ENCODE measurements at regions of chr7 and their contacts with region 1.

Region 1: DNA sequence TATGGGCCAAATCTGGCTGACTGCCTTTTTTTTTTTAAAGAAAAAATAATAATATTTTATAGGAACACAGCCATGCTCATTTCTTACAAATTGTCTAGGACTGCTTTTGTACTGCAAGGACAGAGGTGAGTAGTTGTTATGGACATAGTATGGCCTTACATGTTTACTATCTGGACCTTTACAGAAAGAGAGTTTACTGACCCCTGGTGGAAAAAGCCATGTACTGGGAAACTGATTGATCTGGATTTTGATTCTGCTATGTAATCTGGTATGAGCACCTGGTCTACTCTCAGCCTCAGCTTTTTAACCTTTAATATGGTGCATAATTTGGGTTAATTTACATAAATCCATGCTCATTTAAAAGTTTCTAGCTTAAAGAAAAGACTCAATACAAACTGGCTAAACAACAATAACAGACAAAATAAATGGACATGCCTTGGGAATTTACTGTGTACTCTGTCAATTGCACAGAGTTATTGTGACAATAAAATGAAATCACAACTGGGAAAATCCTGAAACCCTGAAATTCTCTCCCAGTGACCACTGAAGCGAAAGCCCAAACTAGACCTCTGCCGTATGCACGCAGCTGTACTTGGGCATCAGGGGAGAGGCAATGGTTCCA is 260.7 kb downstream of the BMPER start:
- DNase-seq: no peak
- H3K4me3 ChIP-seq: no peak overlapping the region
- H3K27ac ChIP-seq: no peak overlapping the region
- H3K4me1 ChIP-seq: no peaks in the 10 kb centered on the region
- H3K27me3 ChIP-seq: no peaks in the 10 kb centered on the region
- CTCF ChIP-seq: peak; percentile 11 to 39 (median 22)

Region 2: DNA sequence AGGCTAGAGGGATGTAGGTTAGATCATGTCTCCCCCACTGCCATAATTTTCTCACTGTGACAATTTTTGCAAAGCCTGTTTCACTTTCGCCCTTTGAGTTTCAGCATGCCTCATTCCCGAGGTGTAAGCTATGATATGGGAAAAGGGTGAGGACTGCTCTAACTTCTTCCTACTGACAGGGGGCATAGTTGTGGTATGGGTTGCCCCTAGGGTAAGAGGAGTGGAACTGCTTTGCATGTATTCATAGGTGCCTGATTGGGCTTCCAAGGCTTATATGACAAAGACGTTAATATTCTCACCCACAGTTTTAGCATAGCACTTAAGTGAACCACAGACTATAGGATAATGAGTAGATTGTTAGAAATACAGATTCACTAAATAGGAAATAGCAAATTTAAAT is 887.9 kb before region 1 on chr7:
- intact Hi-C with region 1: no loop called
- DNase-seq: no peak
- H3K4me3 ChIP-seq: no peak overlapping the region
- H3K27ac ChIP-seq: no peak overlapping the region
- H3K4me1 ChIP-seq: no peaks in the 10 kb centered on the region
- H3K27me3 ChIP-seq: no peaks in the 10 kb centered on the region
- CTCF ChIP-seq: no peak

Region 3: DNA sequence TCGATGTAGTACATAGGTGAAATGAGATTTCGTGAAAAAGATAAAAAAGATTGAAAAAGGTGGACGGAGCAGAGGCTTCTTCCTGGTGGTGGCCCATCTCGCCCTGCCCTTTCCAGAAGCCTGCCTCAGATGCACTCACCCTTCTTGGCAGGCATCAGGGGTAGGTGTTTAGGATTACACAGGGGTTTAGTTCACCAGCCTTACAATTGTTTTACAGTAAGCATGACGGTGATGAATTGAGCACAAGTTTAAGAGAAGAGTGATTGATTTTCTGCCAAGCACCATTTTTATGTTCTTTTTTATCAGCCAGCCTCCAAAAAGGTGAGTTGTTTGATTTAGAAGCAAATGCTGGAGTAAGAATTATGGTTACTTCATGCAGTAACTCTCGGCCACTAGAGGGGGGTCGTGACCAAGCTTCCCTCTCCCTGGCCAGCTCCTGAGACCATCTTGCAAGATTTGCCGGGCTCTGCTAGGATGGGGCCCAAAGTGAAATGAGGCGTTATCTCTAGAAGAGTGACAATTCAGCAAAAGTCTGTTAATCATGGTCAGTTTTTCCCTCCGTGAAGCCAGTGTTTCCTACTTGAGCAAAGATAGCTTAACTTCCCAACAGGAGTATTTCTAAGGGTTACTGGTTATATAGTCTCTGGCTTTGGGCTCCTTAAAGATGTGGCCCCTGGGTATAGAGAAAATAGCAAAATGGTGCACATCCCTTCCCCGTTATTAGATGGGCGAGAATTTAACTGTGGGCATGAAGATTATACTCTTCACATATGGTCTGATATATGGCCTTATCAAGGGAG is 31.9 kb before region 1 on chr7:
- intact Hi-C with region 1: loop called (anchors 5 kb)
- DNase-seq: peak in 1 of 2 donors; percentile 72
- H3K4me3 ChIP-seq: no peak overlapping the region
- H3K27ac ChIP-seq: no peak overlapping the region
- H3K4me1 ChIP-seq: no peaks in the 10 kb centered on the region
- H3K27me3 ChIP-seq: no peaks in the 10 kb centered on the region
- CTCF ChIP-seq: peak; percentile 34 to 57 (median 36)

Region 4: DNA sequence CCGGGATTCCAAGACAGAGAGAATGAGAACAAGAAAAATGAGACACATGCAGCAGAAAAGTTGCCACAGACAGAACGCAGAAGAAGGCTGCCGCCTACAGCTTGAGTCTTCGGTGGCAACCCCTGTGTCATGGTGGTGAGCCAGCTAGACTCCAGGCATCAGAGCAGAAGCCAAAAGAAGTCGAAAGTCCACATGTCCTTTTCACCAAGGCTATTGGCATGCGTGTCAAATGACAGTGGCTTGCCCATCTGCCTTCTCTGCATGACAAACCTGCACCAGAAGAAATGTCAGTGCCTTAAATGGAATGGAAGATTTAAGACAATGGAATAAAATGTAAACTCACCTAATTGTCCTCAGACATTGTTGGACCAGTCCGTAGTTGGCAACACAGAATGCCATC is 398.1 kb after region 1 on chr7:
- intact Hi-C with region 1: no loop called
- DNase-seq: no peak
- H3K4me3 ChIP-seq: no peak overlapping the region
- H3K27ac ChIP-seq: no peak overlapping the region
- H3K4me1 ChIP-seq: no peaks in the 10 kb centered on the region
- H3K27me3 ChIP-seq: no peaks in the 10 kb centered on the region
- CTCF ChIP-seq: no peak